Prostate gland (tissue), 2 donors: ENCODE measurements at regions of chr1 and their contacts with region 1.

Region 1: DNA sequence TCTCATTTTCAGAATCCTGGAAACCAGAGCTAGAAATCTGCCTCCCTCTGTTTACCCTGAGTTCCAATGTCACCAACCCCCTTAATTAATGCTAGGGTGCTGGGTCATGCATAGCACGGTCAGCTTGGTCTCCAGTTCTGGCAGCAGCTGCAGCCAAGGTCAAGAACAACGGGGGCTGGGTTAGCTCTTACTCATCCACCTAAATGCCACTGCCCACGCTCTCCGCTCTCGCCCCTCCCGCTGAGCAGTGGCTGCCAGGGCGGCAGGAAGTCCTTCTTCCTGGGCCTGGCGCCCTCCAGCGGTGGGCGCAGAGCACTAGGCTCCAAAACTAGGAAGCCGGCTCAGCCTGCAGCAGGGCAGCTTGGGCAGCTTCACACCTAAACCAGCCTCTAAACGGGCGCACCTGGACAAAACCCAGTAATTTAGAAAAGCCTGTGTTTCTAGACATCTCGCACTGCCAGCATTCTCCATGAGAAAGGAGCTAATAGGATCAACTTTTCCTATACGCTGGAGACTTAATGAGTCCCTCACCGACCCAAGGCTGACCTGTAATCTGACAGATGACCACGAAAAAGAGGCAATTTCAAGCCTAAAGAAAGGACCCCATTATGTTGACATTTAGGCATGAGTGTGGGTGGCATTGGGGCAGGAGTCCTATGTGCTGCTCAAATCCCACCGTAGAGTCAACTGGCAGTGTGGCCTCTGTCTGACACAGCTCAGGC is 78.3 kb upstream of the LRRN2 start:
- DNase-seq: peak; percentile 21
- H3K4me3 ChIP-seq: no peak overlapping the region
- H3K27ac ChIP-seq: no peak overlapping the region
- H3K4me1 ChIP-seq: no peaks in the 10 kb centered on the region
- H3K27me3 ChIP-seq: no peaks in the 10 kb centered on the region
- CTCF ChIP-seq: peak in 3 of 4 experiments; percentile 58 to 72 (median 63)
- POLR2A ChIP-seq: no peak

Region 2: DNA sequence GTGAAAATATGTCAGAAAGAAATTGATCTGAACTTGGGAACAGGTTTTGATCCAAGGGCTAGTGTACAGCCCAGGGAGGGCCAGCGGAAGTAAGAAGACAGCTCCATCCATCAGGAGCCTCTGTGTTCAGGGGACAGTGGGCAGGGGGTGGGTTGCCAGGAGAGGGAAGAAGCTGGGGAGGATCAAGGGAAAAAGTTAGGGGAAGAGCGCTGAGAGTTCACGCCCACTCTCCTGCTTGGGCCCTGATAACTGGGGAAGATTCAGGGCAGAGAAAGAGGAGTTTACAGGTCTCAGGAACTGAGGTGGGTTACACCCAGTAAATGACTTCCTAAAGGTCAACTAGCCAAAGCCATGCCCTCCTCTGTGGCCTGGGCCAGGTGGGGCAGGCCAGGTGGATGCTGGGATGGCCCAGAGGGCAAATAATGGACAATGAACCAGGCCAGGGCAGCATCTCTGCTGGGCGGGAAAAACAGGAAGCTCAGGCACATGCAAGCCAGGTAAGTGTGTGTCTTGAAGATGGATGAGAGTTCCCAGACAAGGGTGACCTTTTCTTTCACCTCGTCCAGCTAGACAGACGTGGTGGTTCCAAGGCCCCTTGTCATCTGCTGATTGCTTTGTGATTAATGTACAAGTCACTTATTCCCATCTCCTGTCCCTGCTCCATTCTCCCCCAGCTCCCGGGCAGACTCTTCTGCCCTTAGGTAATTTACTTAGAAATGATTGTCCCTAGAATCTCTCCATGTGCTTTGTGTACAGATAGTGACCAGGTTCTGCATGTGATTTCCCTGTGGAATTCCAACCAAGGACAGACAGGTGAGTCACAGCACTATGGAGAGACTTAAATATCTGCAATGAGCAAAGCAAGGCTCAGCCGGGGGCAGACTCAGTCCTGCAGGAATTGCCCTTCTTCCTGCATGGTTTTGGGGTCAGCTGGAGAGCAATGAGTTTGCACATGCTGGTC is 190.7 kb before region 1 on chr1:
- intact Hi-C with region 1: loop called (anchors 5 kb)
- DNase-seq: no peak
- H3K4me3 ChIP-seq: no peak overlapping the region
- H3K27ac ChIP-seq: no peak overlapping the region
- H3K4me1 ChIP-seq: no peaks in the 10 kb centered on the region
- H3K27me3 ChIP-seq: no peaks in the 10 kb centered on the region
- CTCF ChIP-seq: no peak
- POLR2A ChIP-seq: no peak